A549 (cell line): ENCODE measurements at regions of chr17 and their contacts with region 1.

Region 1: DNA sequence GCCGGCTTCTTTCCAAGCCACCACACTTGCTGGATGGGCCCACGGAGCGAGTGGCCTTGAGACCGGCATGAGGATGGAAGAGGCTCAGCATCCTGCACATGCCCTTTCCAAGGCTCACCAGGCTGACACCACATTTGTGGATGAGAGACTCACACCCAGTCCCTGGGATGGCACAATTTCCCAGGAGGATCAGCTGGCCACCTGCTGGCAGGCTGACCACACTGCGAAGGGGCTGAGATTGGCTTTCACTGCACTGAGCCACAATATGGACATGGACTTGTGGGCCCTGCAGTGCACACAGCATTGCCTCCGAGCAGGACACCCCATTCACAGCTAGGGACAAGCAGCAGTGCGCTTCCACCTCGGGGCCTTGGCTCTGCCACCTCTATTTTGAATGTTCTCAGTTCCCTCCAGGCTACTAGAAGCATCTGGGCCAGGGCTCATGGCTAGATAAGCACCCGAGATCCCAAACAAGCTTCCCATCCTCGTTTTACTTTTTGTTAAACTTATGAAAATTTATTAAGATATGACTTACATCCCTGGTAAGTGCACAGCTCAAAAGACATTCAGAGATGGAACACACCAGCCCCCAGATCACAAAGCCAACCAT is 25.3 kb upstream of the KSR1 start:
- DNase-seq: peak; percentile 45 to 67
- ATAC-seq: peak; percentile 94 to 98
- H3K4me3 ChIP-seq: no peak overlapping the region
- H3K27ac ChIP-seq: no peak overlapping the region
- H3K4me1 ChIP-seq: no peaks in the 10 kb centered on the region
- CTCF ChIP-seq: peak; percentile 60
- EP300 ChIP-seq: no peak
- POLR2A ChIP-seq: no peak
- RAD21 ChIP-seq: peak; percentile 74

Region 2: DNA sequence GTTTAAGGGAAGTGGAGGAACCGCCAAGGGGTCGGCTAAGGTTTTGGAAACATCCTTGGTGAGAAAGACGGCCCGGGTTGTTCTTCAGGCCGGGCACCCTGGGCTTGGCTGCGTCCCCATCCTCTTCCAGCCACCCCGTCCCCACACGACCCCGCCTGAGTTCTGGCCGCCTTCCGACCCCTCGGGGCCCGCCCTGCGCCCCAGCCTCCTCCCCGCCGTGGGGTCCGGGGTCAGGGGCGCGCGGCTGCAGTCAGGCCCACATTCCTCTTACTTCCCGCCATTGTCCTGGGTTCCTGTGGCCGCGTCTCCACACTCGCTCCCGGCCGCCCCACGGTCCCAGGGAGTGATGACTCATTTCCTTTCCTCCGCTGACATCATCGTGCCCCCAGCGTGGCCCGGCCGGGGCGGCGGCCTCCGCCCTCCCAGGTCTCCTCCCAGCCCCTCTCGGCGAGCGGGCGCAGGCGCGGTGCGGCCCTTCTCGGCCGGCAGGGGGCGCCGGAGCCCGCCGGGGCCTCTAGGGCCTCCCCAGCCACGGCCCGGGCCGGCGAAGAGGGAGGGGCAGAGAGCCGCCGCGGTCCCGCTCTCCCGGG is 77.4 kb before region 1 on chr17:
- CTCF ChIA-PET with region 1: interaction called, 32 read pairs
- POLR2A ChIA-PET with region 1: no interaction called
- DNase-seq: peak; percentile 96 to 97
- ATAC-seq: peak; percentile 85 to 93
- H3K4me3 ChIP-seq: peak overlapping the region; percentile 59
- H3K27ac ChIP-seq: peak overlapping the region; percentile 90 to 99
- H3K4me1 ChIP-seq: peaks cover 25% of the 10 kb centered on the region
- CTCF ChIP-seq: peak; percentile 99
- EP300 ChIP-seq: peak; percentile 49 to 64; a peak in 2 of 5 replicates
- POLR2A ChIP-seq: peak; percentile 81
- RAD21 ChIP-seq: peak; percentile 67 to 99

Region 3: DNA sequence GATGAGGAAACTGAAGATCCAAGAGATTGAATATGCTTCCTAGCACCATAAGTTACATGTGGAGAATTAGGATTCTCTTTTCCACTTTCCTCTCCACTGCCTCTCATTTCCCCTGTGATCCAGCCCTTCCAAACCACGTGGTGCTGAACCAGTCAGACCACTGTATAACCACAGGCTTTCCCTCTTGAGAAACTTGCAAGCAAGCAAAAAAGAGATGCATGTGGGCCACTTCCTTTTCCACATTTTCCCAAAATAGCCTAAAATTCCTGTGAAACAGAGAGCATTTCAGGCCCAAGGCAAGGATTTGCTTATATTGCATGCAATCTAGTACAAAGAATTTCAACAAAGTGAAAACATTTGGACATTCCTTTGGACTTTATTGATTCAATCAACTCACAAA is 34.0 kb before region 1 on chr17:
- CTCF ChIA-PET with region 1: interaction called, 10 read pairs
- POLR2A ChIA-PET with region 1: no interaction called
- DNase-seq: no peak
- ATAC-seq: no peak
- H3K4me3 ChIP-seq: no peak overlapping the region
- H3K27ac ChIP-seq: no peak overlapping the region
- H3K4me1 ChIP-seq: no peaks in the 10 kb centered on the region
- CTCF ChIP-seq: no peak
- EP300 ChIP-seq: no peak
- POLR2A ChIP-seq: no peak
- RAD21 ChIP-seq: no peak

Region 4: DNA sequence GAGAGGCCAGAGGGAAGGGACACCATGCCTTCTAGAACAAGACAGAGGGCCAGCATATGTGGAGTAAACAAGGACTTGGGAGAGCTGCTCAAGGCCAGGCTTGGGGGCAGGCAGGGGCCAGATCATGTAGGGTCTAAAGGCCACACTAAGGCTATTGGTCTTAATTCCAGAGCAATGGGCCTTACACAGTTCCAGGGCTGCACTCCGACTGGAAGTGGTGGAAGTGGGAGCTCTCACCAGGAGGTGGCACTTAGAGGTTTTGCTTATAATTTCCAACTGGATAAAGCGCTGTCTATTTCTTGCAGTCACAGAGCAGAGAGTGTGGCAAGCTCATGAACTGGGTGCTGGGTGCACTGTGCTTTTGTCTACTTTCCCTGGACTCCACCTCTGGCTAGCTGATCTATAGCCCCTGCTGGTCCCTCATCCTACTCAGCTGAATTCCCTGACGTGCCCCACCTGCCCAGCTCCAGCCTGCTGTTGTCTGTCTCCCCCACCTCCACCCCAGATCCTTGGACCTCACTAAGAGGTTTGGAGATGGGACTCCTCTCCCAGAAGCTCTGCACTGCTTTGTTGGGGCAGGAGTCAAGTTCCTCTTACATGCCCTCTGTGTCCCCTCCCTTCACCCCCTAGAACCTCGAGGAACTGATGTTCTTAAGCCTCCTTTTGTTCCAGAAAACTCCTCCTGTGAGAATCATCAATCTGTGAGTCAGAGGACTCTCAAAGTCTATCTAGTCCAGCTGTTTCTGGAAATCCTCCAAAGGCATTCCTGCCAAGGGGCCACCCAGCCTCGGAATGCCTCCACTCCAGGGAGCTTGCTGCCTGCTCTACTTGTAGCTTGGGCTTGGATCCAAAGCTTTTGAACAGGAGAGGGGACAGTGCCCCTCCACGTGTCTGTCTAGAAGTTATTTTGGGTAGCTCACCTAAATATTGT is 22.8 kb before region 1 on chr17:
- CTCF ChIA-PET with region 1: interaction called, 18 read pairs
- POLR2A ChIA-PET with region 1: no interaction called
- DNase-seq: peak; percentile 33 to 62
- ATAC-seq: peak; percentile 69 to 88
- H3K4me3 ChIP-seq: no peak overlapping the region
- H3K27ac ChIP-seq: peak overlapping the region; percentile 56 to 59
- H3K4me1 ChIP-seq: peaks cover 32% of the 10 kb centered on the region
- CTCF ChIP-seq: no peak; the same call in 2 of the 3 replicates
- EP300 ChIP-seq: no peak
- POLR2A ChIP-seq: no peak
- RAD21 ChIP-seq: no peak; a peak in 1 of 5 replicates

Region 5: DNA sequence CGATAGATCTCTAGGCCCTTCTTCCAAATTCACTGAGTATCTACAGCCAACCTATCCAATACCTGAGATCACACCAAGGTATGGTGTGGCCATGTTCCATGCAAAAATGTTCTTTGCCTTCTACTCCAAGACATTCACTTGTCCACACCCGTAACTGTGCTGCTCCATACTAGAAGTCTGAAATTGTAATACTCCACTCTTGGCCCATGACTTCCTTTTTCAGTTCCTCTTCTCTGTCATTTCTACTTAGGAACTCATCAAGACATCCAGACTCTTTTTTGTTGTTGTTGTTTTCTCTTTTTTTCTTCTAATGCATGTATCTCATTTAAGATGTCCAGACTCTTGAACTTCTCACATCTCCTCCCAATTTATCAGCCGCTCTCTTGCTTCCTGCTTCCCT is 17.2 kb before region 1 on chr17:
- CTCF ChIA-PET with region 1: interaction called, 18 read pairs
- POLR2A ChIA-PET with region 1: no interaction called
- DNase-seq: no peak
- ATAC-seq: no peak
- H3K4me3 ChIP-seq: no peak overlapping the region
- H3K27ac ChIP-seq: no peak overlapping the region
- H3K4me1 ChIP-seq: peaks cover 22% of the 10 kb centered on the region
- CTCF ChIP-seq: no peak
- EP300 ChIP-seq: no peak
- POLR2A ChIP-seq: no peak
- RAD21 ChIP-seq: no peak

Region 6: DNA sequence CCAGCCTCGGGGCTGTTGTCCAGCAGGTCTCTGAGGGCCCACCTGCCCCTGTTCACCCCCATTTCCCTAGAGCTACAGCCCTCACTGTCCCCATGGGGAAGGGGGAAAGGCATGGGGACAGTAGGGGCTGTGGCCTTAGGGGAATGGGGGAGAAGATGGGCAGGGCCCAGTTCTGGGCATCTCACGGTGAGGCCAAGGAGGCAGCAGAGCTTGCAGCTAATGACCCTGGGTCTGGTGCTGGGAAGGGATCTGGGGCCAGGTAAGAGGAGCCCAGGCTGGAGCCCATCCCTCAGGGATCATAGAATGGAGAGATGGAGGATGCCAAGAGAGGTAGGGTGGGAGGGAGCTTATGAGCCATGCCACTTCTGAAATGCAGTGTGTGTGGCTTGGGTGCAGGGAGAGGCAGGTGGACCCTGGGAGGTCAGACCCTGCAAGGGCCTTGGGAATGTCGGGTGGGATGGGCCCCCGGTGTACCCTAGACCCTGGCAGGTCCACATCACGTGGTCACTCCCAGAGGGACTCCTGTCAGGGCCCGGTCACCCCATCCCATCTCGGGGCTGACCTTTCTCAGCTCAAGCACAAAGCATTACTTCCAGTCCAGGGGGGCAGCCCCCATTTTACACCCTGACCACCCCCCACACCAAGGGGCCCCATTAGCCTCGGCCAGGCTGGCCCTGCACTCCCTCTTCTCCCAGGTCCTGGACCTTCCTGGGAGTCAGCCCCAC is 10.6 kb before region 1 on chr17:
- CTCF ChIA-PET with region 1: interaction called, 23 read pairs
- POLR2A ChIA-PET with region 1: no interaction called
- DNase-seq: no peak
- ATAC-seq: no peak
- H3K4me3 ChIP-seq: no peak overlapping the region
- H3K27ac ChIP-seq: no peak overlapping the region
- H3K4me1 ChIP-seq: no peaks in the 10 kb centered on the region; the same call in 2 of the 3 replicates
- CTCF ChIP-seq: no peak
- EP300 ChIP-seq: no peak
- POLR2A ChIP-seq: no peak
- RAD21 ChIP-seq: no peak

Region 7: GRCh38 chr17:27446569-27447301 is 15.7 kb after region 1 on chr17:
- CTCF ChIA-PET with region 1: interaction called, 16 read pairs
- POLR2A ChIA-PET with region 1: no interaction called
- DNase-seq: peak in 1 of 2 experiments; percentile 38
- ATAC-seq: peak; percentile 45 to 67; a peak in 4 of 6 replicates
- H3K4me3 ChIP-seq: no peak overlapping the region
- H3K27ac ChIP-seq: peak overlapping the region in 1 of 2 experiments; percentile 60; a peak in 2 of 6 replicates
- H3K4me1 ChIP-seq: peaks cover 15% of the 10 kb centered on the region
- CTCF ChIP-seq: no peak
- EP300 ChIP-seq: no peak
- POLR2A ChIP-seq: no peak
- RAD21 ChIP-seq: no peak